Activated T-helper 1 cell treated with anti-CD3 and anti-CD28 coated beads, Interleukin-12 subunit alpha, Interleukin-12 subunit beta, Interleukin-2, Interleukin-4 antibody, amounts not matched to agents 30 ng/mL and 10 ng/mL and 1 ng/mL, durations not matched to agents 14 hours and 24 hours and 36 hours (primary cell): ENCODE measurements at regions of chr3 and their contacts with region 1.

Region 1: DNA sequence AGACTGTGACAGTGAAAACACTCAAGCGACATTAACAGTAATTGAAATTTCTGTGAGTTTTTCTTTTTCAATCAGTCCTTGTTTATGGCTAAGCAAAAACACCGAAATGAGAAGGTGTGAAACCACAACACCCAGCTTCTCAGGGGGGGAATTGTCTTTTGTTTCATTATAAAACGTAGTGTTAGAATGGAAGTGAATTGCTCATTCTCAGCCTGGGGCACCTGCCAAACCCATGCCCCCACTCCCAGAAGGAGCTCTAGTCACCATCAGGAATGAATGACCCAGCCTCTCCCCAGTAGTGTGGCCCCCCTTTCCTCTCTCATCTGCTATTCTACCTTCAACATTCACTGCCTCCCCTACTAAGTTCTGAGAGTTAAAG is 185.8 kb upstream of the CFAP20DC start:
- DNase-seq: peak; percentile 37
- H3K4me3 Mint-ChIP-seq: peak overlapping the region; percentile 58
- H3K27ac Mint-ChIP-seq: peak overlapping the region; percentile 27
- H3K4me1 Mint-ChIP-seq: peaks cover 29% of the 10 kb centered on the region
- H3K27me3 Mint-ChIP-seq: peaks cover 6% of the 10 kb centered on the region

Region 2: GRCh38 chr3:58874795-58875194 is 360.8 kb before region 1 on chr3:
- intact Hi-C with region 1: no loop called
- DNase-seq: no peak
- H3K4me3 Mint-ChIP-seq: no peak overlapping the region
- H3K27ac Mint-ChIP-seq: peak overlapping the region; percentile 65
- H3K4me1 Mint-ChIP-seq: peaks cover 14% of the 10 kb centered on the region
- H3K27me3 Mint-ChIP-seq: no peaks in the 10 kb centered on the region

Region 3: DNA sequence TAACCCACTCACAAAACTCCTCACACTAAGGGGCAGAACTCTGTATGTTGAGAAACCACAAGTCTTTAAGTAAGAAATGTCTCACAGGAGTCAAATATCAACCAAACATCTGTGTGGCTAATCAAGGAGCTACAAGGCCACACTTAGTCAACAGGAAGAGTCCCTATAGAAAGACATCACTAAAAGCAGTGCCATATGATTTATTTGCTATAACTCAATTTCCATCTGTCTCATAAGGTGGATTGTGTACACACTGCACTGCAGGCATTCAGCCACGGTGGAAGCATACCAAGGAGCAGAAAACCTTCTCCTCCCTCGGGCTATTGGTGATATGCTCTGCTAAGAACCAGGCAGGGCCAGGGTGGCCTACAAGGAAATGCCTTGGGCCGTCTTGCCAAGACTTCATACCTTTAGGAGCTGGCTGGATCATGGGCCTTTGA is 11.8 kb after region 1 on chr3:
- intact Hi-C with region 1: loop called (anchors 1 kb)
- DNase-seq: no peak
- H3K4me3 Mint-ChIP-seq: no peak overlapping the region
- H3K27ac Mint-ChIP-seq: peak overlapping the region; percentile 44
- H3K4me1 Mint-ChIP-seq: peaks cover 9% of the 10 kb centered on the region
- H3K27me3 Mint-ChIP-seq: peaks cover 4% of the 10 kb centered on the region

Region 4: DNA sequence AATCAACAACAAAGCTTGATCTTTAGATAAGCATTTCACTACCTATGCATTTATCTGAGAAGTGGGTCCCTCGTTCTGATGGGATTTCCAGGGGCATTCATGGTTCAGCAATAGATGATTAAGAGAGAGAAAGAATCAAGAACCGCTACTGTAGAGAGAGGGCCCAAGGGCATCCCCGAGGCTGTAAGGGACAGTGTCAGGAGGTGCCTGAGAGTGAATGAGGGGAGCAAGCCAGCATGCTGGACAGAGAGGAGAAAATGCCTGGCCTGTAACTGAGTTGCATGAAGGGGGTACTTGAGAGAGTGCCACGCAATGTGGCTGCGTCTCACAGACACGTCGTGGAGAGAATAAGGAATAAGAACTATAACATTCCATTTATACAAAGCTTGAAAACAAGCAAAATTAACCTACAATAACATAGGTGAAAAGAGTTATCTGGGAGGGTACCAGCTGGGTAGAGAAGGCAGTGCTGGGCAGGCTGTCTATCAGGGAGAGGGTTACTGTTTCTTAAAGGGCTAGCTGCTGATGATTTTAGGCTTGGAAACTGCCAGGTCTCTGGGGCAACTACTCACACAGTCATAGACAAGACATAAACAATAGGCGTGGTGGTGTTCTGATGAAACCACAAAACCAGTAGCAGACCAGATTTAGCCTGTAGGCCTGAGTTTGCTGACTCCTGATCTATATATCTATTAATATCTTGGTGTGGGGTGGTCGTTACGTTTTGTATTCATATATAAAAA is 188.8 kb after region 1 on chr3:
- intact Hi-C with region 1: loop called (anchors 1 kb)
- DNase-seq: no peak
- H3K4me3 Mint-ChIP-seq: no peak overlapping the region
- H3K27ac Mint-ChIP-seq: peak overlapping the region; percentile 3
- H3K4me1 Mint-ChIP-seq: peaks cover 52% of the 10 kb centered on the region
- H3K27me3 Mint-ChIP-seq: no peaks in the 10 kb centered on the region

Region 5: DNA sequence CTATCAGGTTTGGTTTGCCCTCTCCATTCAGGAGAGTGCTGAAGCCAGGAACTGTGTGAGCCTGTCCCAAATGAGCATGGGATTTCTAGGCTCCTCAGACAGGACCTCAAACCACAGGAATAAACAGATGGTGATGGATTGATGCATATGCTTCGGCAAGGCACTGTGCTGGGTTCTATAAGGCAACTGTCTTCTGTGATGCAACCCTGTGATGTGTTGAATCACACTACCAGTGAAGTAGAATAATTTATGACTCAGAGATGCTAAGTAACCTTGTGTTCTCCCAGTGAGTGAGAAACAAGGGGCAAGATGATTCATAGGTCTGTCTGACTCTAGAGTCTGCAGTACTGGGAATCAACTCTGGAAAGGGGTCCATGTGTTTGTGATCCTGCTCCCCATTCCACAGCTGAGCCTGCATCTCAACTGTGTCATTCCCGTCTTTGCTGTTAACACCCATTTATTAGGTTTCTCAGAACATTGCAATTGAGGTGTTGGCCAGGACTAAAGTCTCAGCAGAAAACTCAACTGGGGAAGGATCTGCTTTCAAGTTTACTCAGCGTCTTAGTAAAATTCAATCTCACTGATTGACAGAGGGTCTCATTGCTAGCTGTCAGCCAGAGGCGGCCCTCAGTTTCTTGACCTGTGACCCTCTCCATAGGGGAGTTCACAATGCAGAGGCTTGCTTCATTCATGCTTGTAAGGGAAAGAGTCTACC is 324.3 kb after region 1 on chr3:
- intact Hi-C with region 1: loop called (anchors 1 kb)
- DNase-seq: no peak
- H3K4me3 Mint-ChIP-seq: no peak overlapping the region
- H3K27ac Mint-ChIP-seq: peak overlapping the region; percentile 88
- H3K4me1 Mint-ChIP-seq: peaks cover 24% of the 10 kb centered on the region
- H3K27me3 Mint-ChIP-seq: no peaks in the 10 kb centered on the region

Region 6: GRCh38 chr3:59759298-59760031 is 523.8 kb after region 1 on chr3:
- intact Hi-C with region 1: loop called (anchors 10 kb)
- DNase-seq: no peak
- H3K4me3 Mint-ChIP-seq: peak overlapping the region; percentile 32
- H3K27ac Mint-ChIP-seq: no peak overlapping the region
- H3K4me1 Mint-ChIP-seq: peaks cover 67% of the 10 kb centered on the region
- H3K27me3 Mint-ChIP-seq: no peaks in the 10 kb centered on the region